Activated CD8-positive, alpha-beta memory T cell treated with anti-CD3 and anti-CD28 coated beads, Interleukin-2, amount 10 ng/mL, durations not matched to agents 7 days and 5 days (primary cell): ENCODE measurements at regions of chr11 and their contacts with region 1.

Region 1: GRCh38 chr11:77602381-77603088 is 12.8 kb downstream of the AQP11 start:
- DNase-seq: no peak
- ATAC-seq: no peak
- H3K4me3 Mint-ChIP-seq: no peak overlapping the region
- H3K27ac Mint-ChIP-seq: no peak overlapping the region
- H3K4me1 Mint-ChIP-seq: no peaks in the 10 kb centered on the region
- H3K27me3 Mint-ChIP-seq: no peaks in the 10 kb centered on the region

Region 2: DNA sequence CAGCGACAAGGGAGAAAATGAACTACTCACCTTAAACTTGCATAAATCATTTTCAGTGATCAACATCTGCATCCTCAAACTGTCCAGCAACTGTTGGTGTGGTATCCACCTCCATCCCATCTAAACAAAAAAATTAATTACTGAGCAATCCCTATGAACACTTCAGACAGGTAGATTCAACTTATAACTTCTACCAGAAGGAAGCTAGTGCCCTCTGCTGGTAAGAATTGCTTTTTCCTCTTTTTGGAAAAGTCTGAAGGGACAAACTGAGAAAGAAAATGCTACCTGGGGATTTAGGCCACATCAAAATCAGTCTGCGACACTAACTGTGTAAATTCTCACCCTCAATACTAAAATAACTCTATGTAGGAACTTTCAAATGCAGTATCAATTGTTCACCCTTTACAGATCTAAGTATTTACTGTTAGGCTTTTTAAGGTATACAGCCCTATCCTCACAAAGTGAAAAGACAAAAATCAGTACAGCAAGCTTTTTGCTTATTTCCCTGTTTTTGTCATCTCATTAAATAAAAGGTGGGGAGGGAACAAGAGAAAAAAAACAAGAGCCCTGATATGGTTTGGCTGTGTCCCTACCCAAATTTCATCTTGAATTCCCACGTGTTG is 17.2 kb after region 1 on chr11:
- CTCF ChIA-PET with region 1: interaction called, 15 read pairs
- DNase-seq: no peak
- ATAC-seq: peak; percentile 45
- H3K4me3 Mint-ChIP-seq: no peak overlapping the region
- H3K27ac Mint-ChIP-seq: no peak overlapping the region
- H3K4me1 Mint-ChIP-seq: no peaks in the 10 kb centered on the region
- H3K27me3 Mint-ChIP-seq: no peaks in the 10 kb centered on the region